ENCODE measurements at regions of chr5 and their contacts with region 1.

Region 1: GRCh38 chr5:139392678-139393496 is 2.0 kb downstream of the PROB1 start:
- DNase-seq: peak; percentile 79
- ATAC-seq: peak; percentile 71
- H3K4me3 ChIP-seq: peak overlapping the region; percentile 87
- H3K27ac ChIP-seq: peak overlapping the region; percentile 98
- H3K4me1 ChIP-seq: peaks cover 20% of the 10 kb centered on the region
- H3K27me3 ChIP-seq: no peaks in the 10 kb centered on the region
- CTCF ChIP-seq: peak; percentile 66

Region 2: DNA sequence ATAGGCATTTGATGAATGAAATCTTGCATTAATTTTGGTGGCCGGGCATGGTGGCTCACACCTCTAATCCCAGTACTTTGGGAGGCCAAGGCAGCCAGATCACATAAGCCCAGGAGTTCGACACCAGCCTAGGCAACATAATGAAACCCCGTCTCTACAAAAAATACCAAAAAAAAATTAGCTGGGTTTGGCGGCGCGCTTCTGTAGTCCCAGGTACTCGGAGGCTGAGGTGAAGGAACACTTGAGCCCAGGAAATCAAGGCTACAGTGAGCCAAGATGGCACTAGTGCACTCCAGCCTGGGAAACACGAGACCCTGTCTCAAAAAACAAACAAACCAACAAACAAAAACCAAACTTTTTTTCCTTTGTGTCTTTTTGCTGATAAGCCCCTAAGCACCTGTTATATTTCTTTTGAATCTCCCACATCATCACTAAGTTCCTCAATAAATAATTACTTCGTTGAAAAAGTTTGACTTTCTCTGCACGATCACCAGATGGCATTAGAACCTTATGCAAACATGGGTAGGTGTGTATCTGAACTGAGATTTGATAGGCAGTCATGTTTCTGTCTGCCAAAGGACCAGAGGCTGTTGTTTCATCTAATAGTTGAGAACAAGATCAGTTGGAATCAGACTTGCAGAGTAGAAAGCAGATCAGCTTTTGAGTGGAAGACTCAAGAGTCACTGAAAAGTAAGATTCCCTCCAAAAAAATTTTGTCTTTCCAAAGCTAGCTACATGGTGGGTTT is 104.8 kb before region 1 on chr5:
- CTCF ChIA-PET with region 1: no interaction called
- POLR2A ChIA-PET with region 1: no interaction called
- intact Hi-C with region 1: loop called (anchors 1 kb)
- DNase-seq: peak; percentile 33
- ATAC-seq: peak; percentile 60
- H3K4me3 ChIP-seq: no peak overlapping the region
- H3K27ac ChIP-seq: no peak overlapping the region
- H3K4me1 ChIP-seq: no peaks in the 10 kb centered on the region
- H3K27me3 ChIP-seq: no peaks in the 10 kb centered on the region
- CTCF ChIP-seq: peak; percentile 45; the same call in 1 of the 2 replicates

Region 3: GRCh38 chr5:139312075-139312474 is 80.8 kb before region 1 on chr5:
- CTCF ChIA-PET with region 1: no interaction called
- POLR2A ChIA-PET with region 1: no interaction called
- intact Hi-C with region 1: no loop called
- DNase-seq: no peak
- ATAC-seq: no peak
- H3K4me3 ChIP-seq: no peak overlapping the region
- H3K27ac ChIP-seq: no peak overlapping the region
- H3K4me1 ChIP-seq: peaks cover 12% of the 10 kb centered on the region; the same call in 1 of the 2 replicates
- H3K27me3 ChIP-seq: no peaks in the 10 kb centered on the region
- CTCF ChIP-seq: no peak

Region 4: GRCh38 chr5:139368613-139369012 is 24.3 kb before region 1 on chr5:
- CTCF ChIA-PET with region 1: interaction called, 3 read pairs
- POLR2A ChIA-PET with region 1: interaction called, 9 read pairs
- intact Hi-C with region 1: loop called (anchors 1 kb)
- DNase-seq: no peak
- ATAC-seq: no peak
- H3K4me3 ChIP-seq: no peak overlapping the region
- H3K27ac ChIP-seq: no peak overlapping the region
- H3K4me1 ChIP-seq: peaks cover 15% of the 10 kb centered on the region
- H3K27me3 ChIP-seq: no peaks in the 10 kb centered on the region
- CTCF ChIP-seq: peak; percentile 26; the same call in 1 of the 2 replicates

Region 5: DNA sequence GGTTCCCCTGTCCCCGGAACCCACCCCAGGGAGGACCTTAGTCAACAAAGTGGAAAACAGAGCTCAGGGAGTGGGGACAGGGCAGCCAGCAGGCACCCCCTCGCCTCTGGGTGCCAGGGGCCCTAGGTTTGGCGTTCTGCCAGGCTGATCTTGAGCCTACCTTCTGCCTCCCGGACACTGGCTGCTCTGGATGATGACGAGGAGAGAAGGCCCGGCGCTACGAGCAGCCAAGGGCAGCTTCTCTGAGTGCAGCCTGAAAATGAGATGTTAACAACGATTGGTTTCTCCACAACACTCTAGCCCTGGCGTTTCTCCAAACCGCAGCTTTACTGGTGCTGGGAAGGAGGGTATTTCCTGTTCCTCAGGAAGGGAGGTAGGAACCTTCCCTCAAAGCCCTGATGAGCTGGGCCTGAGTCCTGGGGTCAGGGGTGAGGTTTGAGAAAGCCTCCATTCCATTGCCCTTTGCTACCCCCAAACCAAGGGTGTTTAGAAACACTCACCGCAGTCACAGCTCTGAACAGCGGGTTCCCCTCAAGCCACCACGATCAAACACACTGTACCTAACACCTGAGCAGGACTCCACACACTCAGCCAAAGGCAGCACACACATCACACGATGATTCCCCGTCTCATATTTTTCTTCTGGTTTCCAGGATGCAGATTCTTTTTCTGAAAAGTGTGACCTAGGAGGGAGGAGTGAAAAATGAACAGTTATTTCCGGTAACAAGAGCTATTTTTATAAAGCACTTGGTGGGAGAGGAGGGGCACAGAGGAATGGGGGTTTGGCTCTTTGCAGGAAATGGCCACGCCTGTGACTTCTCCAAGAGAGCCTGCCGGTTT is 89.4 kb after region 1 on chr5 and contains the start of gene STING1:
- CTCF ChIA-PET with region 1: no interaction called
- POLR2A ChIA-PET with region 1: no interaction called
- intact Hi-C with region 1: no loop called
- DNase-seq: peak; percentile 97
- ATAC-seq: peak; percentile 89
- H3K4me3 ChIP-seq: peak within 1 kb of the TSS; percentile 53
- H3K27ac ChIP-seq: peak within 1 kb of the TSS; percentile 90
- H3K4me1 ChIP-seq: peaks cover 20% of the 10 kb centered on the region
- H3K27me3 ChIP-seq: no peaks in the 10 kb centered on the region
- CTCF ChIP-seq: no peak
- total RNA-seq, gene STING1: 6.5 and 12.6 TPM in 2 replicates